BJ (cell line): ENCODE measurements at regions of chr3 and their contacts with region 1.

Region 1: DNA sequence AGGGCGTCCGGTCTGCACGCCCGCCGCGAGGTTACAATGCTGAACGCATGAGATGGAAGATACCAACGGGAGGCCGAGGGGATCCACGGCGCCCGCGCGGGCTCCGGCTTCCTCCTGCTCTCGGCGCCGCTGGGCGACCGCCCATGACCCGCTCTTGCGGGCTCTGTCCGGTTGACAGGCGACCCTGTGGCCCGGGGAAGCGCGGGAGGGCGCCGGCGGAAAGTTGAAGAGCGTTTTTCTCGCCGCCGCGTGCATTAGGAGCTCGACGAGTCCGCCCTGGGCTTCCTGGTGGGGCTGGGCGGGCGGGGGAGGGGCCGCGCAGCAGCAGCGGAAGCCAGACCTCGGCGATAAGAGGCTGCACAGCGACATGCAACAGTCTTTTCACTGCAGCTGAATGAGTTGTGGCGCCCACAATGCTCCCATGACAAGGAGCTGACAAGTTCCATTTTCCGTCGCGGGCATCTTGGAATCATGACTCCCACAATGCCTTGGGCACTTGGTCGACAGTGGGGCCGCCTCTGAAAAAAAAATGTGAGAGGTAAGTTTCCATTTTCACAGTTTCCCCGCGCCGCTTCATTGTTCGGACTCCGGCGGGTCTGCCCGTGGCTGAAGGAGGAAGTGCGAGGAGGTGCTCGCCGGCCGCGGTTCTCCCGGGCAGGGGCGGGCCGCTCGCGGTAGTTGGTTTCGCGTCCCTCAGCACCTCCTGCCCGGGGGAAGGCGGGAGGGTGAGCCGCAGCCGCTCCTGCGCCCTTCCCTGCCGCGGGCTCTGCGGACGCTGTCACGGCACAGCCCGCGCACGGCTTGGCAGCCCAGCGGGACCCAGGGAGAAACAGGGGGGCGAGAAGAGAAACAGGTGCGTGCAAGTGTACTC is at the start of gene MBNL1:
- DNase-seq: no peak
- H3K4me3 ChIP-seq: peak within 1 kb of the TSS; percentile 76
- H3K27me3 ChIP-seq: no peaks in the 10 kb centered on the region
- CTCF ChIP-seq: no peak
- polyA plus RNA-seq, gene MBNL1: 183 and 203 TPM in 2 replicates

Region 2: GRCh38 chr3:152104847-152105415 is 163.9 kb before region 1 on chr3:
- CTCF ChIA-PET with region 1: no interaction called
- POLR2A ChIA-PET with region 1: interaction called, 13 read pairs
- DNase-seq: no peak
- H3K4me3 ChIP-seq: no peak overlapping the region
- H3K27me3 ChIP-seq: no peaks in the 10 kb centered on the region
- CTCF ChIP-seq: no peak

Region 3: GRCh38 chr3:152159328-152159727 is 109.5 kb before region 1 on chr3:
- CTCF ChIA-PET with region 1: no interaction called
- POLR2A ChIA-PET with region 1: interaction called, 20 read pairs
- DNase-seq: peak; percentile 74
- H3K4me3 ChIP-seq: no peak overlapping the region
- H3K27me3 ChIP-seq: no peaks in the 10 kb centered on the region
- CTCF ChIP-seq: no peak

Region 4: DNA sequence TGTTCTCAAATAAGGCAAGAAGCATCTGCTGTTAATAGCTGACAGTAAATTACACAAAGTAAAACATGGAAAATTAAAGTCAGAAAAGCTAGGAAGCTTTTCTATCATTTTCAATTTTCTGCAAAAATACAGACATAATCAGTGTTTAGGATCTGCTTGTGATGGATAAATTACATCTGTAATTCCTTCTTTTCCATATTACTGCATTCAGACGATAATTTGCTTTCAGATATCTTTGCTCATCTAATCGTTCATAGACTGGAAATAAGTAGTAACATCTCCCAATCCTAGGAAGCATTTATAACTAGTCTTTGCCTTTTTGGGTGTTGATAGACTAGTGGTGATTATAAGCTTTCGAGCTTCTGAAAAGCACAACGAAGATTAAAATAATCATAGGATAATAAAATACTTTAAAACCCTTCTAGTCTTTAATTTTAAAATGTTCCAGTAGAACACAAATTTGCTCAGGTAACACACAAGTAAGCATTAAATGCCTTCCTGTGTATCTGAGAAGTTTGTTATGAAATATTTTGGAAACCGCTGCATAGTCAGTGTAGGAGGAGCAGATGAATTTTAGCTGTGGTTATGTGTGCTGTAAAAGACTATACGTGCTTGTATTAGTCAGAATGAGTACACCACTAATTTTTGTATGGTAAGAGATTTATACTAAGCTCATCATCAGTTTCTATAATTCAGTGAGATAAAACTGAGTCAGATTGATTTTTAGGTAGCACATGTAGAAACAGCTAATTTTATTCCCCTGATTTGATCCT is 40.9 kb after region 1 on chr3:
- CTCF ChIA-PET with region 1: no interaction called
- POLR2A ChIA-PET with region 1: interaction called, 12 read pairs
- DNase-seq: no peak
- H3K4me3 ChIP-seq: no peak overlapping the region
- H3K27me3 ChIP-seq: no peaks in the 10 kb centered on the region
- CTCF ChIP-seq: no peak

Region 5: DNA sequence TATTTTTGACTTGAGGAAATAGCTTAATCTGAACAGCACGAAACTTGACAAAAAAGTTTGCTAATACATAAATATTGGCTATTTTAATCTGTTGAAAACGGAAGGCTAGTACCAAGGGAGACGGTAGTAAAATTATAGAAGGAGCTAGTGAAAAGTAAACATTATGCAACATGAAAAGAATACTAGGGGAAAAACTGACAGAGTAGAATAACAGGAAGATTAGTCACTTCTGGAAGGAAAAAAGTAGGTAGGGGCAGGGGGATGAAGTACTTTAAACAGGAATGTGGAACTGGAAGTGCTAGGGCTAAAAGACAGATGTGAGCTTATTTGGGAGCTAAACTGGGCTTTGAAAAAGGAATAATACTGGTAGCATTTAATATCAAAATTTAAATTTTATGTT is 60.1 kb after region 1 on chr3:
- CTCF ChIA-PET with region 1: no interaction called
- POLR2A ChIA-PET with region 1: interaction called, 10 read pairs
- DNase-seq: peak; percentile 62
- H3K4me3 ChIP-seq: no peak overlapping the region
- H3K27me3 ChIP-seq: no peaks in the 10 kb centered on the region
- CTCF ChIP-seq: no peak